Heart right ventricle (tissue), 16 donors: ENCODE measurements at regions of chr22 and their contacts with region 1.

Region 1: DNA sequence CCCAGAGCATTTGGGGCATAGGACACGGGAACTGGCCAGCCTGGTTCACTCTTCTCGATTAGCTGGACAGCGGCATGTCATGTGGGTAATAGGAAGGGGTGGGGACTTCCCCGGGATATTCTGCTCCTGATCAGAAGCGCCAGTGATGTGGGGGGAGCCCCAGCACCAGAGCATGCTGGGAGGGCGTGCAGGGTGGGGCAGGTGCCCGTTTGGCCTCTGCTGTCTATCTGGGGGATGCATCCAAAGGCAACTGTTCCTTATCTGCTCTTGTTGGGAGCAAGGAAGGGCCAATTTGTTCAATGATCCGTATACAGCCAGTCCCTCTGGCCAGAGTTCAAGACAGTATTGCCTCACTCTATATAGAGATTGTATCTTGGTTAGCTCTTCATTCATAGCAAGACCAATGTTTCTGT is 43.6 kb downstream of the PPARA start:
- DNase-seq: no peak
- ATAC-seq: peak in 2 of 8 donors; percentile 27 to 32
- H3K4me3 ChIP-seq: no peak overlapping the region
- H3K27ac ChIP-seq: no peak overlapping the region
- H3K4me1 ChIP-seq: peaks cover 0 to 35% (median 31%) of the 10 kb centered on the region in 9 donors
- H3K27me3 ChIP-seq: no peaks in the 10 kb centered on the region
- CTCF ChIP-seq: no peak

Region 2: DNA sequence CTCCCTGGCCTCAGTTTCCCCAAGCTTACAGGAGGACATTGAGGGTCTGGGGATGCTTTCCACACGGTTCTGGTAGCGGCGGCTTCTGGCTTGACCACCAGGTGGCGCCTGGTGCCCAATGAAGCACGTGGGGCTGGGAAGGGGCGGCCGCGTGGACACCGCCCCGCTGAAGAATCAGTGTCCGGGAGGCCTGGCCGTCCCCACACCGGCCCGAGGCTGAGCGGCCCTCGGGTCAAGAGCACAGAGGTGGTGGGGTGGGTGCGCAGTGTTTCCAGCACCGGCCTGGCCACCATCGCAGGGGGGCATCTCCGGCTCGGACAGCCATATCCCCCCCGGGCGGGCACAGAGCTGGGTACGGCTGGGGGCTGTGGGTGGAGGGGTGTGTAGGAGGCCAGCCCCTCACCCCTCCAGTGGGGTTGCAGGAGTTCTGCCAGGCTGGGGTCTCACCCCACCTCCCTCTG is 71.4 kb before region 1 on chr22:
- intact Hi-C with region 1: no loop called
- DNase-seq: peak; percentile 71 to 83
- ATAC-seq: peak; percentile 58 to 79 (median 70)
- H3K4me3 ChIP-seq: peak overlapping the region in 1 of 10 donors; percentile 16
- H3K27ac ChIP-seq: no peak overlapping the region
- H3K4me1 ChIP-seq: peaks cover 0 to 23% (median 5%) of the 10 kb centered on the region in 9 donors
- H3K27me3 ChIP-seq: no peaks in the 10 kb centered on the region
- CTCF ChIP-seq: peak; percentile 93 to 99 (median 96)

Region 3: DNA sequence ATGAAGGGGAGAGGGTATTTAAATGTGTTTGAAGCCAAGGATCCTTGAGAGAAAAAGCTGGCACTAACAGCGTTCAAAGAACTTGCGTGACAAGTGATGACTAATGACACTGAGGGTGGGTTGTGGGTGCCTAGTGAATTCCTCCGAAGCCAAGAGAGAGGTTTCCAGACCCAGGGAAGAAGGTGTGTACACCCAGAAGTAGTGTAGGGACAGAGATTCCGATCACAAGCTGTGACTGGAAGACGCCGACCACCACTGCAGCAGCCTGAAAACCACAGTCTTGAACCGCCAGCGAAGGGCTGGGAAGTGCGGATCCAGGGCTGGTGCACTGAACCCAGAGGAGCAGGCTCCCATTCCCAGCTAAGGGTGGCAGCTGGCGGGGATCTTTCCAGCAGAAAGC is 34.1 kb before region 1 on chr22:
- intact Hi-C with region 1: loop called in 2 of 10 experiments (anchors 5 kb)
- DNase-seq: no peak
- ATAC-seq: no peak
- H3K4me3 ChIP-seq: no peak overlapping the region
- H3K27ac ChIP-seq: no peak overlapping the region
- H3K4me1 ChIP-seq: peaks cover 0 to 33% (median 8%) of the 10 kb centered on the region in 9 donors
- H3K27me3 ChIP-seq: no peaks in the 10 kb centered on the region
- CTCF ChIP-seq: no peak

Region 4: GRCh38 chr22:46229701-46230100 is 35.8 kb after region 1 on chr22:
- intact Hi-C with region 1: no loop called
- DNase-seq: no peak
- ATAC-seq: no peak
- H3K4me3 ChIP-seq: no peak overlapping the region
- H3K27ac ChIP-seq: no peak overlapping the region
- H3K4me1 ChIP-seq: peaks cover 0 to 19% (median 8%) of the 10 kb centered on the region in 9 donors
- H3K27me3 ChIP-seq: no peaks in the 10 kb centered on the region
- CTCF ChIP-seq: no peak